Activated CD4-positive, alpha-beta memory T cell treated with anti-CD3 and anti-CD28 coated beads, Interleukin-2, amount 10 ng/mL, durations not matched to agents 7 days and 5 days (primary cell): ENCODE measurements at regions of chr12 and their contacts with region 1.

Region 1: GRCh38 chr12:117836999-117837736 is 131.6 kb downstream of the KSR2 start:
- DNase-seq: peak; percentile 75
- H3K4me3 Mint-ChIP-seq: no peak overlapping the region
- H3K27ac Mint-ChIP-seq: no peak overlapping the region
- H3K4me1 Mint-ChIP-seq: no peaks in the 10 kb centered on the region
- H3K27me3 Mint-ChIP-seq: no peaks in the 10 kb centered on the region

Region 2: DNA sequence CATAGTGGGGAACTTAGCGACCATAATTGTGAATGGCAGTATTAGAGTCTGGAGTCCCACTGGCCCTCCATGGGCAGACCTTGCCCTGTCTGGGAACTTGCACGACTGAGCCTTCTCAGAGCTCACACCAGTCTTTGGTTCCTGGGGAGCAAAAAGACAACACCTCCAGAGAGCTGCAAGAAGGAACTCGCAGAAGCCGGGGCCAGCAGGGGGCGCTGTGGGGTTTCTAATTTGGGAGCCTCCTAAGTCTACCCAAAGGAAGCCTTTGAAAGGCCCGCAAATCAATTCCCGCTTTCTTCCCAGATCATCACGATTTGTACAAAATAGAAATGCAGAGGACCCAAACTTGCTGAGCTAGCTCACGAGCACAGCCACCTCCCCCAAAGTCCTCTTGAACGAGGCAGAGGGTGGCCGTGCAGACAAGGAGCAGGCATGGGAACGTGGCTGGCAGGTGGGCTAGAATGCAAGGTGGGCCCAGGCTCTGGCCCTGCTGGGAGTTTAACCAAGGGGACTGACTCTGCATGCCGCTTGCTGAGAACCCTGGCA is 600.6 kb before region 1 on chr12:
- CTCF ChIA-PET with region 1: interaction called, 15 read pairs
- POLR2A ChIA-PET with region 1: no interaction called
- DNase-seq: peak; percentile 78
- H3K4me3 Mint-ChIP-seq: no peak overlapping the region
- H3K27ac Mint-ChIP-seq: no peak overlapping the region
- H3K4me1 Mint-ChIP-seq: no peaks in the 10 kb centered on the region
- H3K27me3 Mint-ChIP-seq: no peaks in the 10 kb centered on the region

Region 3: GRCh38 chr12:117367011-117367638 is 470.0 kb before region 1 on chr12:
- CTCF ChIA-PET with region 1: interaction called, 28 read pairs
- POLR2A ChIA-PET with region 1: no interaction called
- DNase-seq: peak; percentile 56
- H3K4me3 Mint-ChIP-seq: no peak overlapping the region
- H3K27ac Mint-ChIP-seq: no peak overlapping the region
- H3K4me1 Mint-ChIP-seq: no peaks in the 10 kb centered on the region
- H3K27me3 Mint-ChIP-seq: peaks cover 22% of the 10 kb centered on the region

Region 4: DNA sequence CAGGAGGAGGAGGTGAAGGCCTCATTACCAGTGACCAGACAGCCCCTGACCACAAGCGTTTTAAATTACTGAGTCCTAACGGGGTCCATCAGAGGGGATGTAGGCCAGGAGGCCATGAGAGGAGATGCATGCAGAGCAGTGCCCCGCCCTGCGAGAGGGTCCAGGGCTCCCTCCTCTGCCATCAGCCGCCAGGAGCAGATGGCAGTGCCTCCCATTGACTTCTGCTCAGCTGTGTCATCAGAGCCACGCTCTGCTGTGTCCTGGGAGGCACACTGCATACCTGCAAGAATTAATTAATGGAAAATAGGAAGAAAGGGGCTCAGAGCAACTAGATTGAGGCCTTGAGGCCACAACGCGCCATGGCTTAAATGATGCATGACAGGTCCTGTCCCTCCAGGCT is 104.4 kb before region 1 on chr12:
- CTCF ChIA-PET with region 1: no interaction called
- POLR2A ChIA-PET with region 1: no interaction called
- DNase-seq: no peak
- H3K4me3 Mint-ChIP-seq: no peak overlapping the region
- H3K27ac Mint-ChIP-seq: no peak overlapping the region
- H3K4me1 Mint-ChIP-seq: no peaks in the 10 kb centered on the region
- H3K27me3 Mint-ChIP-seq: no peaks in the 10 kb centered on the region

Region 5: GRCh38 chr12:117850048-117850447 is 12.9 kb after region 1 on chr12:
- CTCF ChIA-PET with region 1: interaction called, 30 read pairs
- POLR2A ChIA-PET with region 1: no interaction called
- DNase-seq: no peak
- H3K4me3 Mint-ChIP-seq: no peak overlapping the region
- H3K27ac Mint-ChIP-seq: no peak overlapping the region
- H3K4me1 Mint-ChIP-seq: no peaks in the 10 kb centered on the region
- H3K27me3 Mint-ChIP-seq: peaks cover 2% of the 10 kb centered on the region

Region 6: GRCh38 chr12:117857632-117858612 is 20.8 kb after region 1 on chr12:
- CTCF ChIA-PET with region 1: interaction called, 28 read pairs
- POLR2A ChIA-PET with region 1: no interaction called
- DNase-seq: peak; percentile 52
- H3K4me3 Mint-ChIP-seq: no peak overlapping the region
- H3K27ac Mint-ChIP-seq: no peak overlapping the region
- H3K4me1 Mint-ChIP-seq: no peaks in the 10 kb centered on the region
- H3K27me3 Mint-ChIP-seq: no peaks in the 10 kb centered on the region

Region 7: GRCh38 chr12:118164798-118165486 is 327.8 kb after region 1 on chr12:
- CTCF ChIA-PET with region 1: no interaction called
- POLR2A ChIA-PET with region 1: no interaction called
- DNase-seq: no peak
- H3K4me3 Mint-ChIP-seq: no peak overlapping the region
- H3K27ac Mint-ChIP-seq: no peak overlapping the region
- H3K4me1 Mint-ChIP-seq: peaks cover 22% of the 10 kb centered on the region
- H3K27me3 Mint-ChIP-seq: no peaks in the 10 kb centered on the region